ENCODE measurements at regions of chr2 and their contacts with region 1.

Region 1: DNA sequence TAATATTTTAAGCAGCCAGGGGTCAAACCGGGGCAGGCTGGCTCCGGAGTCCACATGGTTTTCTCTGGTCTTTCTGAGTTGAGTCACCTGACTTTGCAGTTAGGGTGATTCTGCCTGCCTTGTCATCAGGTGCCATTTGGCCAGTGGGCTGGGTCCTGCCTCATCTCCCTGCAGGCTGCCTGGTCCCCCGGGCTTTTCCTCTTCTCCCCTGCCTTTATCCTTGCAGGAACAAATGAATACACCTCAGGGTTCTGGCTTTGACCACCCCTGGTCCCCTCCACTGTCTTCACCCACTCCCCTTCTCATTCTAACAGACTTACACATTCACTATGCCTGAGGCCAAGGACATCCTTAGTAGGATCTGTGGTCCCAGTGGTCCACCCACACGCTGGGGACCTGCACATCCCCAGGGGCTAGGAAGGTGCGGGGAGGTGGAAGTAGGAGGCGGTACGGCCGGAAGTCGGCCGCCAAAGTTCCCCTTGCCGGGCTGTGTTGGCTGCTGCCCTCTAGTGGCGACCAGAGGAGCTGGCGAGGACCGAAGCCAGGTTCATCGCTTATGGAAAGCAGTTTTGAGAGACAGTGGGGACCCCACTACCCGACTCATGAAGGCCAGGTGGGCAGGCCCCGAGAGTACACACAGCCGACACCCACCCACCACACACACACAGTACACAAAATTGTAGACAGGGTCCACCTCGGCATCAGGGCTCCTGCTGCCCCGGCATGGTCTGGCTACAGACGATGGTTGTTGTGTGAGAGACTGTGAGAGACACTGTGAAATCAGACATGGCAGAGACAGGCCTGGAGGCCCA is 6.3 kb upstream of the TEX261 start:
- DNase-seq: peak; percentile 63 to 79 (median 79)
- H3K4me3 ChIP-seq: no peak overlapping the region
- H3K4me3 Mint-ChIP-seq: peak overlapping the region in 1 of 2 donors; percentile 57
- H3K27ac ChIP-seq: no peak overlapping the region
- H3K27ac Mint-ChIP-seq: peak overlapping the region in 2 of 7 donors; percentile 42 to 61
- H3K4me1 ChIP-seq: peaks cover 14 to 22% of the 10 kb centered on the region in 2 donors
- H3K4me1 Mint-ChIP-seq: peaks cover 18% of the 10 kb centered on the region
- H3K27me3 ChIP-seq: no peaks in the 10 kb centered on the region
- H3K27me3 Mint-ChIP-seq: peaks cover 1 to 3% (median 2%) of the 10 kb centered on the region in 3 donors
- CTCF ChIP-seq: peak; percentile 92

Region 2: DNA sequence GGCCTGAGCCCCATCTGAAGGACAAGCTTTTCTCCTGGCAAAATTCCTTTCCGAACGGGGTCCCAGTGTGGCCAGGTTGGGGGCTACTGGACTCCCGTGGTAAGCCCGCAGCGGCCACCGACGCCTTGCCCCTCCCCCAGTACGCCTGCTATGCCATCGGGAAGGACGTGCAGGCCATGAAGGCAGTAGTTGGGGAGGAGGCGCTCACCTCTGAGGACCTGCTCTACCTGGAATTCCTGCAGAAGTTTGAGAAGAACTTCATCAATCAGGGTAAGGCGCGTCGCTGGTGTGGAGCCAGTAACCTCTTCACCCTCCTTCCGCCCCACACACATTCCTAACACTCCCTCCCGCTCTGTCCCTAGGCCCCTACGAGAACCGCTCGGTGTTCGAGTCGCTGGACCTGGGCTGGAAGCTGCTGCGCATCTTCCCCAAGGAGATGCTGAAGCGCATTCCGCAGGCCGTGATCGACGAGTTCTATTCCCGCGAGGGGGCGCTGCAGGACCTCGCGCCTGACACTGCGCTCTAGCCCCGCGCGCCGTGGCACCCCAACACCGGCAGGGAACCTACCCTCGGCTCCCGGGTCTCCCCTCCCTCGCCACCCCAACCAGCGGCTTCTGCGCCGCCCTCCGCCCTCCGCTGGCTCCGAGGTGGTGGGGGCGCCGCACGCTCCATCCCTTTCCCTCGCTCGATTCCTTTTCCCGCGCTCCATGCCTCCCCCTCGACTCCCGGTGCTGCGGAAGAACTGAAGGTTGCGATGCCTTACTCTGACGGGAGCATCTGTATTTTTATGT is 36.2 kb before region 1 on chr2:
- intact Hi-C with region 1: loop called in 1 of 2 experiments (anchors 1 kb)
- DNase-seq: peak; percentile 65 to 77 (median 77)
- H3K4me3 ChIP-seq: peak overlapping the region; percentile 27 to 76 (median 33)
- H3K4me3 Mint-ChIP-seq: peak overlapping the region; percentile 80 to 91
- H3K27ac ChIP-seq: no peak overlapping the region
- H3K27ac Mint-ChIP-seq: peak overlapping the region in 1 of 7 donors; percentile 41
- H3K4me1 ChIP-seq: peaks cover 9 to 10% of the 10 kb centered on the region in 2 donors
- H3K4me1 Mint-ChIP-seq: peaks cover 7% of the 10 kb centered on the region
- H3K27me3 ChIP-seq: peaks cover 4 to 30% of the 10 kb centered on the region in 2 donors
- H3K27me3 Mint-ChIP-seq: peaks cover 29 to 59% (median 55%) of the 10 kb centered on the region in 3 donors
- CTCF ChIP-seq: peak; percentile 92